CD4-positive, alpha-beta memory T cell (primary cell): ENCODE measurements at regions of chr9 and their contacts with region 1.

Region 1: GRCh38 chr9:69121828-69122548 is 52.1 kb upstream of the TJP2 start:
- DNase-seq: peak; percentile 44 to 59 (median 54)
- H3K4me3 ChIP-seq: peak overlapping the region; percentile 34 to 75
- H3K4me3 Mint-ChIP-seq: peak overlapping the region; percentile 93 to 97 (median 96)
- H3K27ac ChIP-seq: no peak overlapping the region
- H3K27ac Mint-ChIP-seq: peak overlapping the region; percentile 31 to 92 (median 87)
- H3K4me1 ChIP-seq: peaks cover 13% of the 10 kb centered on the region
- H3K4me1 Mint-ChIP-seq: peaks cover 6 to 19% (median 11%) of the 10 kb centered on the region in 4 donors
- H3K27me3 ChIP-seq: no peaks in the 10 kb centered on the region
- H3K27me3 Mint-ChIP-seq: no peaks in the 10 kb centered on the region

Region 2: GRCh38 chr9:68925175-68925574 is 196.8 kb before region 1 on chr9:
- CTCF ChIA-PET with region 1: no interaction called
- POLR2A ChIA-PET with region 1: no interaction called
- intact Hi-C with region 1: no loop called
- DNase-seq: no peak
- H3K4me3 ChIP-seq: no peak overlapping the region
- H3K4me3 Mint-ChIP-seq: no peak overlapping the region
- H3K27ac ChIP-seq: no peak overlapping the region
- H3K27ac Mint-ChIP-seq: no peak overlapping the region
- H3K4me1 ChIP-seq: no peaks in the 10 kb centered on the region
- H3K4me1 Mint-ChIP-seq: no peaks in the 10 kb centered on the region
- H3K27me3 ChIP-seq: no peaks in the 10 kb centered on the region
- H3K27me3 Mint-ChIP-seq: peaks cover 9 to 16% of the 10 kb centered on the region in 2 donors

Region 3: DNA sequence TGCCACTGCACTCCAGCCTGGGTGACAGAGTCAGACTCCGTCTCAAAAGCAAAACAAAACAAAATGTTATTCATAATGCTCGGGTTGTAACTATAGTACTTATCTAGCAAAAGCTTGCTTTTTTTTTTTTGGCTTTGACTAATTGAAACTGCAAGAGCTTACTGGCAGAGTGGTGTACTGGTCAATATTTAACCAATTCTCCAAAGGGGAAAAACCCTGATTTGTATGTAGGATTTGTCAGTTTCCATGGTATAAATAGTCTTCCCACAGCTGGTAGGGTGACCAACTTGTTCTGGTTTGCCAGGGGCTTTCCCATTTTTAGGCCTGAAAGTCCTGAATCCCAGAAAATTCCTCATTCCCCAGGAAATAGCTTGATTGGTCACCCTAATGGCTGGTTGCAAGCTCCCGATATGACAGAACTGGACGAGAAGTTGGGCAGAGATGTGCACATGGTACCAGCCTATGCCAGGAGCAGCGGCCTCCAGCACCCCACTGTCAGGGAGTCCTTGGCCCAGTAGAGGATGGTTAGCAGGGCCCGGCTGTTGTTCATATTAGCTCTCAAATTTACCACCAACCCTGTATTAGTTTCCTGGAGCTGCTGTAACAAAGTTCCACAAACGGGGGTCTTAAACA is 28.4 kb before region 1 on chr9:
- CTCF ChIA-PET with region 1: no interaction called
- POLR2A ChIA-PET with region 1: no interaction called
- intact Hi-C with region 1: no loop called
- DNase-seq: no peak
- H3K4me3 ChIP-seq: no peak overlapping the region
- H3K4me3 Mint-ChIP-seq: no peak overlapping the region
- H3K27ac ChIP-seq: no peak overlapping the region
- H3K27ac Mint-ChIP-seq: no peak overlapping the region
- H3K4me1 ChIP-seq: no peaks in the 10 kb centered on the region
- H3K4me1 Mint-ChIP-seq: peaks cover 0 to 2% (median 0%) of the 10 kb centered on the region in 4 donors
- H3K27me3 ChIP-seq: no peaks in the 10 kb centered on the region
- H3K27me3 Mint-ChIP-seq: no peaks in the 10 kb centered on the region

Region 4: DNA sequence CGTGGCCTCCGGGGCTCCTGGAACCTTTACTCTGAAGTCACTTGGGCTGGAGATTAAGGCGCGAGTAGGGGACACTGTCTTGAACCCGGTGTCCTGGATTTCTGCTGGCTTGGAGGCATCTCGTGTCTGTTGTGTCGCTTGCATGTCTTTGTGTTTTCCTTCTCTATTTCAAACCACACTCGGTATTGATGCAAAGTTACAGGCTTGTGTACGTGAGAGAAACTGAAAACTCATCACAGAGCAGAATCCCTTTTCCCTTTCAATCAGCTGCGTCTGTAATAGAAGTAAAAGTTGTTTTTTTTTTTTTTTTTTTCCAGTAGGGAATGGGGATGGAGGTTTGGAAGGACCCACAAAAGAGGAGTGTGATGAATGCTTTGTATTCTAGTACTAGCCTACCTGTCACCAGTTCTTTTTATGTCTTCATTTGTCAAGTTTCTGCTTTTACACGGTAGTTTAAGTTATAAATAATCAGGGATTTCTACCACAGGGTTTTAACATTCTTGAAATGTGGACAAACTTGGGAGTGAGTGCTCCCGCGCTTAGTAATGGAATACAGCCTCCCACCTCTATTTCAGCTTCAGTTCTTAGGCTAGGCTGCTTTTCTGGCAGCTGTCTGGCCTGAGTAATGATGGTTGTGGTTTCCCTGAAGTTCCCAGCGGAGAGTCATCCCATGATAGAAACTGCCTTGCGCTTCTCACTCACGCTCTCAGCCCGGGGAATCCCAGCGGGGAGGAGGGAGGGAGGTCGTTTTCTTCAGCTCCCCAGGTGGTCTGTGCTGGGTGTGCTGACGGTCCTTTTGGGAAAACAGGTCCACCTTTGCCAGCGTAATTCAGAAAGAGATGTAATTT is 52.9 kb after region 1 on chr9:
- CTCF ChIA-PET with region 1: interaction called, 12 read pairs
- POLR2A ChIA-PET with region 1: interaction called, 3 read pairs
- intact Hi-C with region 1: loop called (anchors 5 kb)
- DNase-seq: peak in 1 of 5 donors; percentile 44
- H3K4me3 ChIP-seq: peak overlapping the region; percentile 21 to 67
- H3K4me3 Mint-ChIP-seq: peak overlapping the region; percentile 85 to 91 (median 88)
- H3K27ac ChIP-seq: no peak overlapping the region
- H3K27ac Mint-ChIP-seq: peak overlapping the region in 4 of 7 donors; percentile 17 to 69 (median 29)
- H3K4me1 ChIP-seq: peaks cover 40% of the 10 kb centered on the region
- H3K4me1 Mint-ChIP-seq: peaks cover 23 to 62% (median 36%) of the 10 kb centered on the region in 4 donors
- H3K27me3 ChIP-seq: peaks cover 10% of the 10 kb centered on the region
- H3K27me3 Mint-ChIP-seq: peaks cover 4 to 18% of the 10 kb centered on the region in 2 donors